ENCODE measurements at regions of chr19 and their contacts with region 1.

Region 1: GRCh38 chr19:30269638-30270037 is 102.5 kb upstream of the ZNF536 start:
- DNase-seq: no peak

Region 2: GRCh38 chr19:30001791-30002190 is 267.8 kb before region 1 on chr19:
- intact Hi-C with region 1: no loop called
- DNase-seq: no peak

Region 3: DNA sequence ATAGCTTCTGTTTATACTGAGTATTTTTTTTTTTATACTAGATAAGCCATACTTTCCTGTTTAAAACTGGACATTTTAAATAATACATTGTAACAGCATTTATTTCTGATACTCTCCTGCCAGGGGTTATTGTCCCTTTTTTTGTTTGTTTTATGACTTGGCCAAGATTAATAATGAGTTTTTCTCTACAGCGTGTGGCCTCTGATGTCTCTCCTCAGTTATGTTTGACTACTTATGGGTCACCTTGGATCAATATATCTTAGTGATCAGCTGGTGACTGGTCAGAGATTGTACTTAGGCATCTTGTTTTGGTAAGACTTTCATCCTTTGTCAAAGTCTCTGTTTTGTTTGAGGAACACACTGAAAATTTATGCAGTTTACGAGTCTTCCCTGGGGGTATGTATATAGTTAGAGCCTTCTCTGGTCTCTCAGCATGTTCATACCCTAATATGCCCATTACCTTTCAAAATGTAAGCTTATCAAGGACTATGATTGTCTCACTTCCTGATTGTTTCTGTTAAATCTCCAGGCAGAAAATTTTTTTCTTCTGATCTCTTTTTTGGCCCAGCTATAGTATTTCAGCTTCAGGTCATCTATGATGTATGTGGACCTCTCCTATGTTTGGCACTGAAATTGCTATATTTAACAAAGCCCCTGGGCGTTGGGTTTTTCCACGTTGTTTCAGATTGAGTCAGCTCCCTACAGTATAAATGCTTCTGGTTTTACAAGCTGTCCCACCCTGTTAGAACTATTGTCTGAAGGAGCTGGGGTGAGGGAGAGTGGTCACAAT is 239.7 kb before region 1 on chr19:
- intact Hi-C with region 1: loop called in 1 of 2 experiments (anchors 5 kb)
- DNase-seq: no peak

Region 4: GRCh38 chr19:30092721-30093569 is 176.7 kb before region 1 on chr19:
- intact Hi-C with region 1: no loop called
- DNase-seq: peak; percentile 63

Region 5: GRCh38 chr19:30360376-30361106 is 90.9 kb after region 1 on chr19:
- intact Hi-C with region 1: no loop called
- DNase-seq: peak; percentile 31